Caki2 (cell line): ENCODE measurements at regions of chr19 and their contacts with region 1.

Region 1: DNA sequence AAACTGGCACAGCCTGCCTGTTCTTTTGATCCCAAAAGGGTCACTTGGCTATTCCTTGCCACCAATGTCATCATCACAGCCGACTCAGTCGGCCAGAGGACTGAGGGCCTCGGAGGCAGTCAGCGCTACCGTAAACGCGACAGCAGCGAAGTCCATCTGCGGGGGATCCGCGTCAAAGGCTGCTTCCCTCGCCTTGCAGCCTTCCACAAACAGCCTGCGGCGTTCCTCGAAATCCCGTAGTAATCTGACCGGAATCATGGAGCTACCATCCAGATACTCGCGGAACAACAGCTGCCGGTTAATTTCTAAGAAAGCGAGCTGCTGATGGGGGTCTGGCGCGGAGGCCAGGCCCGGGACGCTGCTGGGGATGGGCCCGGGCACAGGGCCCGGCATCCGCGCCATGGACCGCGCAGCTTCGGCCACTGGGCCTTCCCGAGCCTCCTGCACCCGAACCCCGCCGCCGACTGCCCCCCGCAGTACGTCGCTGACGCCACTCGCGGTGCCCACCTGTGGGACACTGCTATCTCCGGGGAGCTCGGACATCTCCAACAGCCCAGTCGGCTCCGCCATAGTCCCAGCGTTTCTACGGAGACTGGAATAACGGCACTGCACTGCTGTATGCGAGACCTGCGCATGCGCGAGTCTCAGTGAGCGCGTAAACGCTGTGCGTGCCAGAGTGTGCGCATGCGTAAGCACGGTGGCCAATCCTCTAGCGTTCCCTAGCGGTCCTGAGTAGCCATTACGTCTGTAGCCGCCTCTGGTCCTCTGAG is at the start of gene EID2B:
- DNase-seq: peak; percentile 88
- total RNA-seq, gene EID2B: 6.2 and 10.2 TPM in 2 replicates

Region 2: GRCh38 chr19:39492225-39492624 is 40.2 kb before region 1 on chr19:
- in situ Hi-C with region 1: no loop called
- DNase-seq: no peak

Region 3: GRCh38 chr19:39671738-39672363 is 139.4 kb after region 1 on chr19:
- in situ Hi-C with region 1: loop called (anchors 25 kb)
- DNase-seq: peak; percentile 50